Calu3 (cell line): ENCODE measurements at regions of chr16 and their contacts with region 1.

Region 1: GRCh38 chr16:48609652-48610029 is 339 bp downstream of the N4BP1 start:
- DNase-seq: no peak
- H3K4me3 Mint-ChIP-seq: no peak overlapping the region
- H3K27ac Mint-ChIP-seq: peak overlapping the region; percentile 99
- H3K4me1 Mint-ChIP-seq: peaks cover 13% of the 10 kb centered on the region
- H3K27me3 Mint-ChIP-seq: no peaks in the 10 kb centered on the region
- CTCF ChIP-seq: no peak

Region 2: DNA sequence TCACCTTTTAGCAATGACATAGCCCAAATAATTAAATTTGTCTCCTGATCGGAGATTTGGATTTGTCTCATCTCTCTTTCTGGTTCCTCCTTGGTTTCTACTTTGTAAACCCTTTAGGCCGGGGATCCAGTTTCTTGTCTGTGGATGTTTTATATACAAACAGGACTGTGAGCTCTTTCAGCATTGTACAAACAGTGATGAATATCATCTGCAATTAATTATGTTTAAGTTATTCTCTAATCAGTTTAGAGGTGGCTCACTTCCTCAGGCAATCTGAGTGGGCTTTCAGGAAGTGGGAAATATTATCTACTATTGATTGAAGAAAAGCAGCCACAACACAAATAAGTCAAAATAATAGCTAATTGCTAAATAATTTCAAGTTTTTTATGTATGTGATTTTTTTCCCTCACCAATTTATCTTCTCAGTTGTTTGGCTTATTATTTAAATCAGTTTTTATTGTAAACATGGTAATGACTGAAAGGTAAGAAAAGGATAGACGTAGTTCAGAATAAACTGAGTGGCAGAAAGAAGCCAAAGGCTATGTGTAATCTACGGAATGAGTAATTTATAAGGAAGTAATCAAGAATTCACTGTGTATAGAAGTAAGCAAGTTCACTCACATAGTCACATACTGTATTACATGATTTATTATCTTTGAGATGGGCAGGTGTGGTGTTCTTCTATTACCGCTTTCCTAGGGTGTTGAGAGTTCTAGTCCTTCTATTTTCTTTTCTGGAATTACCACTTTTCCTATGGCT is 358.9 kb before region 1 on chr16:
- CTCF ChIA-PET with region 1: no interaction called
- intact Hi-C with region 1: loop called (anchors 5 kb)
- DNase-seq: no peak
- H3K4me3 Mint-ChIP-seq: peak overlapping the region; percentile 11
- H3K27ac Mint-ChIP-seq: peak overlapping the region; percentile 61
- H3K4me1 Mint-ChIP-seq: peaks cover 26% of the 10 kb centered on the region
- H3K27me3 Mint-ChIP-seq: no peaks in the 10 kb centered on the region
- CTCF ChIP-seq: no peak

Region 3: DNA sequence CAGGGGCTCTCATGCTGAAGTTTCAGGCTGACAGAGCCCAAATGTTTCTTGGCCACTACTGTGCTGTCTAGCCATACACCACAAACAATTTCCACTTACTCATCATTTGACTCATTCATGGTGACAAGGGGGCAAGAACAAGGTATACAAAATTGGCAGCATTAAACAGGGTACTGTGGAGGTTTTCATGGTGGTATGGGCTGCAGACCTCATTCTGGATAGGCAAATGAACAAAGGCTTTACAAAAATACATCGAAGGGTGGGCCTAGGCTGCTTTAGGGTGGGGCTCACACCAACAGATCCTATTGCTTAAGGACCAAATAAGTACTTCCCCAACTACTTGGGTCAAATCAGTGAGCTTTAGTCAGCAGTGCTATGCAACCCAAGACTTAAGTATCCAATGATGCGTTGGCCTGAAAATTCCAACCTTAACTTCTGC is 52.7 kb before region 1 on chr16:
- CTCF ChIA-PET with region 1: interaction called, 7 read pairs
- intact Hi-C with region 1: loop called (anchors 5 kb)
- DNase-seq: no peak
- H3K4me3 Mint-ChIP-seq: no peak overlapping the region
- H3K27ac Mint-ChIP-seq: no peak overlapping the region
- H3K4me1 Mint-ChIP-seq: peaks cover 9% of the 10 kb centered on the region
- H3K27me3 Mint-ChIP-seq: no peaks in the 10 kb centered on the region
- CTCF ChIP-seq: no peak

Region 4: DNA sequence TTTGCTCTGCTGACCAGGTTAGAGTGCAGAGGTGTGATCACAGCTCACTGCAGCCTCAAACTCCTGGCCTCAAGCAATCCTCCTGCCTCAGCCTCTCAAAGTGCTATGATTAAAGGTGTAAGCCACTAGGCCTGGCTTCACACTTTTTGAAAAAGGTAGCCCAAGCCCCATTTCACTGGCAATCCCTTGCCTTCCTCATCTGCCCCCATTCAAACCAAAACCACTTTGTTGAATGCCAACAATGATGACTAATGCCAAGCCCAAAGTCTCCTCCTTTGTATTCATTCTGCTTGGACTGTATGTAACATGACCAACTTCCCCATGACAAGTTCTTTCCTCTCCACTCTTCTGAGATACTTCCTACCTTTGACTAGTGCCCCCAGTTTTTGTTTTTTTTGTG is 32.7 kb before region 1 on chr16:
- CTCF ChIA-PET with region 1: no interaction called
- intact Hi-C with region 1: loop called (anchors 1 kb)
- DNase-seq: peak; percentile 21
- H3K4me3 Mint-ChIP-seq: no peak overlapping the region
- H3K27ac Mint-ChIP-seq: peak overlapping the region; percentile 4
- H3K4me1 Mint-ChIP-seq: peaks cover 42% of the 10 kb centered on the region
- H3K27me3 Mint-ChIP-seq: no peaks in the 10 kb centered on the region
- CTCF ChIP-seq: no peak

Region 5: GRCh38 chr16:48623304-48624016 is 13.8 kb after region 1 on chr16:
- CTCF ChIA-PET with region 1: interaction called, 22 read pairs
- intact Hi-C with region 1: no loop called
- DNase-seq: peak; percentile 91
- H3K4me3 Mint-ChIP-seq: peak overlapping the region; percentile 80
- H3K27ac Mint-ChIP-seq: no peak overlapping the region
- H3K4me1 Mint-ChIP-seq: peaks cover 23% of the 10 kb centered on the region
- H3K27me3 Mint-ChIP-seq: peaks cover 17% of the 10 kb centered on the region
- CTCF ChIP-seq: peak; percentile 97

Region 6: DNA sequence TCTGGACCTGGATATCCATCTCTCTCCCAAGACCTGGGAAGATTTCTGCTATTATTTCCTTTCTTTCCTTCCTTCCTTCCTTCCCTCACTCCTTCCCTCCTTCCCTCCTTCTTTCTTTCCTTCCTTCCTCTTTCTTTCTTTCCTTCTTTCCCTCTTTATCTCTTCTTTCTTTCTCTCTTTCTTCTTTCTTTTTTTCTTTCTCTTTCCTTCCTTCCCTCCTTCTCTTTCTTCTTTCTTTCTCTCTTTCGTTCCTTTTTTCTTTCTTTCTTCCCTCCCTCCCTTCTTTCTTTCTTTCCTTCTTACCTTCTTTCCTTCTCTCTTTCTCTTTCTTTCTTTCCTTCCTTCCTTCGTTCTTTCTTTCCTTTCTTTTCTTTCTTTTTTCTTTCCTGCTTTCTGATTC is 38.2 kb after region 1 on chr16:
- CTCF ChIA-PET with region 1: no interaction called
- intact Hi-C with region 1: no loop called
- DNase-seq: no peak
- H3K4me3 Mint-ChIP-seq: no peak overlapping the region
- H3K27ac Mint-ChIP-seq: no peak overlapping the region
- H3K4me1 Mint-ChIP-seq: no peaks in the 10 kb centered on the region
- H3K27me3 Mint-ChIP-seq: no peaks in the 10 kb centered on the region
- CTCF ChIP-seq: no peak